Breast epithelium (tissue), 4 donors: ENCODE measurements at regions of chr5 and their contacts with region 1.

Region 1: DNA sequence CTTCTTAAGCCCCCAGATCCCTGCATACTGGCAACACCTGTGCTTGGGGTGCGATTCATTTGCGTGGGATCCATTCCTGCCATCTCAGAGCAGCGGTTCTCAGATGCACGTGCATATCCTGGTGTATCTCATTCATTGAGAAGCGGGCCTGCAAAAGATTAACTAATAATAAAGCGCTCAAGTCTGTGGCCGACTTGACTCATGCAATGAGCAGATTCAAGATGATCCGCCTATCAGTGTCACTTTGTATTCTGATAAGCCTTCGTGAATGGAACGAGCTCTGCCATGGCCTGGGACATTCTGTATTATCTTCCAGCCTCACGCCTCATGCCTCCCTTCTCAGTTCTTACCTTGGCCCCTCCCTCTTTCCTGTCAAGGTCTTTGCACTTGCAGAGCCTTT is 22.3 kb downstream of the C1QTNF2 start:
- DNase-seq: no peak
- H3K4me3 ChIP-seq: no peak overlapping the region
- H3K27ac ChIP-seq: no peak overlapping the region
- H3K4me1 ChIP-seq: no peaks in the 10 kb centered on the region
- H3K27me3 ChIP-seq: no peaks in the 10 kb centered on the region
- CTCF ChIP-seq: no peak
- POLR2A ChIP-seq: no peak

Region 2: GRCh38 chr5:160199410-160199911 is 148.6 kb before region 1 on chr5:
- intact Hi-C with region 1: loop called (anchors 2 kb)
- DNase-seq: peak; percentile 56 to 58
- H3K4me3 ChIP-seq: peak overlapping the region; percentile 21 to 69 (median 46)
- H3K27ac ChIP-seq: no peak overlapping the region
- H3K4me1 ChIP-seq: peaks cover 0 to 6% of the 10 kb centered on the region in 2 donors
- H3K27me3 ChIP-seq: no peaks in the 10 kb centered on the region
- CTCF ChIP-seq: peak in 2 of 3 donors; percentile 52 to 97
- POLR2A ChIP-seq: no peak

Region 3: GRCh38 chr5:160418561-160419457 is 70.7 kb after region 1 on chr5 and contains the start of gene SLU7:
- intact Hi-C with region 1: no loop called
- DNase-seq: peak; percentile 92 to 95
- H3K4me3 ChIP-seq: peak within 1 kb of the TSS; percentile 80 to 90 (median 84)
- H3K27ac ChIP-seq: peak within 1 kb of the TSS; percentile 95 to 96
- H3K4me1 ChIP-seq: no peaks in the 10 kb centered on the region
- H3K27me3 ChIP-seq: no peaks in the 10 kb centered on the region
- CTCF ChIP-seq: no peak
- POLR2A ChIP-seq: peak; percentile 84
- total RNA-seq, gene SLU7: 77.0 to 88.3 (median 86.3) TPM